ENCODE measurements at regions of chr17 and their contacts with region 1.

Region 1: DNA sequence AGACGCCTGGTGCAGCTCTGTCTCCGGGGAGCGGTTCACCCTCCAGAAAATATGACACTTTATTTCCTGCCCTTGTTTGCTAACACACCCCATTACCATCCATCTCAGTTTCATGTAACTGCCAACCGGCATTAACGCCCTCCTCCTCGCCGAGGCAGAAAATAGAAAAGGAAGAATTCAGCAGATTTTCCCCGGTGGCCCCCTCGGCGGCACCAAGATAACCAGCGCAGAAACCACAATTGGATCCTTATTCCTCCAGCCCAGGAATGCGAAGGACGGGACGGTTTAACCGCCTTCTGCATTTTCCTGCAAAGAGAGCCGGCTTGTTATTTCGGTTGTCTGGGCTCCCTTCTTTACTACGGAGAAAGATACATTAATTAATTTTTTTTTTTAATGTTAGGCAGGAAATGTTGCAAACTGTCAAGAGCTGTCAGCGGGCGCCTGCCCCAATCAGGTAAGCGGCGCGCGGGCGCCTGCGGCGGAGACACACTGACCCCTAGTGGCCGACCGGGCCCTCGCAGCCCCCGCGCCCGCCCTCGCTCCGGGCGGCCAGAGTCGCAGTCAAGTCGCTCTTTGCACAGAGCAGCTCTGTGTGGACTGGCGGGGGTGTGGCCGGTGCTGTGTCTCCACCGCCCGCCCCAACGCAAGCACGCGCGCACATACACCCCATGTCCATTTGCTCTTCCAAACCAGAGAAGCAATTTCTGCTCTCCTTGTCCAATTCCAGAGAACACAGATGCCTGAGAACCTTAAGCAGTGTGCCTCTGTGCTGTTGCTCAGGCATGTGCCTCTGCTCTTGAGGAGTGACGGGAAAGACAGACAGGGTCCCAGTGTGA is 53.6 kb downstream of the C17orf67 start:
- DNase-seq: peak; percentile 13
- H3K4me3 ChIP-seq: peak overlapping the region; percentile 51
- H3K27ac ChIP-seq: no peak overlapping the region
- H3K27me3 ChIP-seq: no peaks in the 10 kb centered on the region
- CTCF ChIP-seq: peak; percentile 91

Region 2: DNA sequence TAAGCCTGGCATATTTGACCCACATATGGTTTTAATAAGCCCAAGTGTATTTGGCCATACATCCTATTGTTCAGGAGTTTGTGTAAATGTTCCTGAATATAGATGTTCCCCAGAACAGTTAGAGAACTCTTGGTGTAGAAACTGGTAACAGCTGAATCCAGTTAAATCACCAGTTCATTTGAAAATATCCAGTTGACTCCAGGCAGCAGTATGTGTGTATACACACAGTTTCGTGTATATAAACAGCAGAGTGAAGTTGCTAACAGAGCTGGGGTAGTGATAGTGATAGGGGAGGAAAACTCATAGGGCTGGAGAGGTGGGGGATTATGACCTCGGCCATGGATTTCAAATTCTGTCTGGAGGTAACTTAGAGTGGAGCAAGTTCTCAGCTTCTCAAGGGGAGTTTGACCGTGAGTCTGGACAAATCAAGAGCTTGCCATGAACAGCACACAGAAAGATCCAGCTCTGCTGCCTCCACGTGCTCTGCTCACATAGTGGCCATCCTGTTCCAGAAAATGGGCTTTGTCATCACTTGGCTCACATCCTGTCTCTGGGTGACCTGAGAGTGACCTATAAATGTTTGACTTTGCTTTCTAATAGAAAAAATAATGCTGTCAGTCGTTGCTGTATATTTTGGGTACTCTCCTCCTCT is 1327.9 kb before region 1 on chr17:
- CTCF ChIA-PET with region 1: interaction called, 14 read pairs
- POLR2A ChIA-PET with region 1: no interaction called
- DNase-seq: peak; percentile 66
- H3K4me3 ChIP-seq: no peak overlapping the region
- H3K27ac ChIP-seq: peak overlapping the region; percentile 79
- H3K27me3 ChIP-seq: no peaks in the 10 kb centered on the region
- CTCF ChIP-seq: no peak

Region 3: GRCh38 chr17:56319517-56319916 is 460.6 kb before region 1 on chr17:
- CTCF ChIA-PET with region 1: no interaction called
- POLR2A ChIA-PET with region 1: interaction called, 14 read pairs
- DNase-seq: peak; percentile 29
- H3K4me3 ChIP-seq: no peak overlapping the region
- H3K27ac ChIP-seq: no peak overlapping the region
- H3K27me3 ChIP-seq: no peaks in the 10 kb centered on the region
- CTCF ChIP-seq: peak; percentile 66

Region 4: GRCh38 chr17:56592487-56593085 is 187.5 kb before region 1 on chr17:
- CTCF ChIA-PET with region 1: interaction called, 58 read pairs
- POLR2A ChIA-PET with region 1: interaction called, 9 read pairs
- DNase-seq: no peak
- H3K4me3 ChIP-seq: peak overlapping the region; percentile 67
- H3K27ac ChIP-seq: no peak overlapping the region
- H3K27me3 ChIP-seq: peaks cover 37% of the 10 kb centered on the region
- CTCF ChIP-seq: peak; percentile 59

Region 5: DNA sequence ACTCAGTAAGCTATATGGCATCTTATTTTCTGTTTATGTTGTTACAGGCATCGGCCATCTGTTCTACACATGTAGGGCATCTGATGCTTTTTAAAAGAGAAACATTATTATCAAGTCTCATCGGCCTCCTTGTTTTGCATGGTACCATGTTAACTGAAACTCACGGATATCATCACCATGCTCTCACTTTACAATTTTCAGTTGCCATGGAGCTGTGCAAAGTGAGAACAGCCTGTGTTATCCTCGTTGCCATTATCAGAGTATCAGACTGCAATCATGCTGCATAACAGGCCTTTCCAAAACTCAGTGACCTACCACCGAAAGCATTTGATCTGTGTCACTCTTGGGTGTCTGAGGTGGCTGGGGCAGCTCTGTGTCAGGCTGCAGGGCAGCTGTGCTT is 56.7 kb before region 1 on chr17:
- CTCF ChIA-PET with region 1: interaction called, 45 read pairs
- POLR2A ChIA-PET with region 1: no interaction called
- DNase-seq: no peak
- H3K4me3 ChIP-seq: no peak overlapping the region
- H3K27ac ChIP-seq: no peak overlapping the region
- H3K27me3 ChIP-seq: peaks cover 9% of the 10 kb centered on the region
- CTCF ChIP-seq: no peak

Region 6: DNA sequence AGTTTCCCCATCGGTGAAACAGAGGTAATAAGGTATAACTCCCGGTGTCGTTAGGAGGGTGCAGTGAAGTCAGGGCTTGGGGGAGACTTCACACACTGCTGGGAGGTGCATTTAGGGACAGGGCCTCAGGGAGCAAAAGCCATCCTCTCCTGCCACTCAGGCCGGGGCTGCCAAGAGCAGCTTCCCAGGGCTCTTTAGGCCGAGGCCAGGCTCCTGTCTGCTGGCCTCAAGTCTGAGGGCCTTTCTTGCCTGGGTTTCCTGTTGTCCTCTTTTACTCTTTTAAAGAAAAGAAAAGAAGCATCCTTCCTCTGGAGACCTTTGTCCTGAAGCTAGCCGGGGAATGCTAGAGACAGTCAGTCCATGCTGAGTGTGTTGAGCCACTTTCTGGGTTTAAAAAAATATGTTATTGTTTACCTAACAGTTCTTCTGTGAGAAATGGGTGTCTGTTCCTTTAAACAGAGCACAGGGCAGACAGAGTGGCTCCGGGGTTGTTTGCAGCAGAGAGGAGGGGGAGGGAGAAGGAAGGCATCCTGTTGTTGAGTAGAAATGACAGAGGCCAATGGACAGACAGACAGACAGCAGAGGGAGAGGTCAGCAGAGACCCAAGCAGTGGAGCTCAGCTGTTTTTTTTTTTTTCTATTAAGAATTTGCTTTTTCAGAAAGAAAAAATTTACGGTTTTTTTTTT is 25.4 kb before region 1 on chr17:
- CTCF ChIA-PET with region 1: interaction called, 25 read pairs
- POLR2A ChIA-PET with region 1: interaction called, 14 read pairs
- DNase-seq: no peak
- H3K4me3 ChIP-seq: no peak overlapping the region
- H3K27ac ChIP-seq: peak overlapping the region; percentile 31
- H3K27me3 ChIP-seq: no peaks in the 10 kb centered on the region
- CTCF ChIP-seq: no peak

Region 7: DNA sequence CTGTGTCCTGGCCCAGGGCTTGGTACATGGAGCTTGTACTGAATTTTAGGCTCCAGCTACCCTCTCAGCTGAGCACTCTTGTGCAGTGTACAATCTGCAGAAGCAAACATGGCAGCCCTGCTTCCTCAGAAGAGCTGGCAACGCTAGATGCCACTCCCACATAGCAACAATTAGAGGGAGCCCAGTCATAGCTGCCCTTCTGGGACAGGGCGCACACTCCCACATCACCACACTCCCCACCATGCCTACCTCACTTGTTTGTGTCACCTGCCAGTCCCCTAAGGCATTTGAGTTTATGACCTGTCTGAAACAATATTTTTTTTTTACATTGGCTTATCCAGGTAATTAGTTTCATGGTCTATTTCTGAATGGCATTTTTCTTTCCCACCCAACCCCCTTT is 18.7 kb before region 1 on chr17:
- CTCF ChIA-PET with region 1: interaction called, 25 read pairs
- POLR2A ChIA-PET with region 1: interaction called, 14 read pairs
- DNase-seq: no peak
- H3K4me3 ChIP-seq: no peak overlapping the region
- H3K27ac ChIP-seq: no peak overlapping the region
- H3K27me3 ChIP-seq: no peaks in the 10 kb centered on the region
- CTCF ChIP-seq: no peak